Transverse colon (tissue), 4 donors: ENCODE measurements at regions of chrX and their contacts with region 1.

Region 1: GRCh38 chrX:17923546-17923945 is 62.4 kb upstream of the RAI2 start:
- DNase-seq: no peak
- H3K4me3 ChIP-seq: no peak overlapping the region
- H3K27ac ChIP-seq: no peak overlapping the region
- H3K4me1 ChIP-seq: peaks cover 0 to 12% (median 2%) of the 10 kb centered on the region in 4 donors
- H3K27me3 ChIP-seq: no peaks in the 10 kb centered on the region
- CTCF ChIP-seq: no peak
- EP300 ChIP-seq: no peak
- POLR2A ChIP-seq: no peak

Region 2: GRCh38 chrX:18789916-18790315 is 866.4 kb after region 1 on chrX:
- in situ Hi-C with region 1: no loop called
- intact Hi-C with region 1: loop called (anchors 5 kb)
- DNase-seq: no peak
- H3K4me3 ChIP-seq: no peak overlapping the region
- H3K27ac ChIP-seq: no peak overlapping the region
- H3K4me1 ChIP-seq: no peaks in the 10 kb centered on the region
- H3K27me3 ChIP-seq: no peaks in the 10 kb centered on the region
- CTCF ChIP-seq: no peak
- EP300 ChIP-seq: no peak
- POLR2A ChIP-seq: no peak